Body of pancreas (tissue), 4 donors: ENCODE measurements at regions of chr6 and their contacts with region 1.

Region 1: DNA sequence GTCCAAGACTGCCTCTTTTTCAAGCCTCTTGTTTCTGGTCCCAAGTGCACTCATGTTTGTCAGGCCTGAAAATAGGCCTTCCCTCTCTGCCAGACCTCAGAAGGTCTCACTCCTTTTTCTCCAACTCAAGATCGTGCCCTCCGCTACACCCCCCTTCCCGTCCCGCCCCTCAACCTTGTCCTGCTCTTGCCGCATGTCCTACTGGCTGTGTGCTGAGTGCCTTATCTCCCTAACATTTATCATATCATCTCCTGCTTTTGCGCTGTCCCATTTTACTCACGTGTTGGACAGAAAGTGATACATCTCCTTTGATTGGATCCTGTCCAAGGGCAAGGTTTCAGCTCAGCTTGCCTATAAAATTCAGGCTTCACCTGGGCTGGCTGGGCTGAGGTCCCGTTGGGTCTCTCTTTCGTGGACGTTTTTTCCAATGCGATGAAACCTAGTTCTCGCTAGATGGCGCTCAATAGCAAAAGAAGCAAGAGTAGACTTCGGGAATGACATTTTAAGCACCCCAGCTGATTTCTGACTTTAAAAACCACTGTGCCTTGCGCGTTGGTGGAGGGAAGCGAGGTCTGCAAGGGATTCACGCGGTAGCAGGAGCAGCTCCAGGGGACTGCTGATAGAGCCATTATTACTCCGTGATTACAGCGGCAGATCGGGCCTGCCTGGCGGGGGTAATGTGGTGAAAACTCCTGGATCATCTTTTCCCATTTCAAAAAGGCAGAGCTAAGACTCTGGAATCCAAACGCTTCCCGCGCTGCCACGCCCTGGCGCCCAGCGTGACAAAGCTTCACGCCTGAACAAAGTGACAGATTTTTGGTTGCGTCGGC is 137.6 kb downstream of the IMPG1 start:
- DNase-seq: peak; percentile 54 to 76 (median 65)
- ATAC-seq: peak; percentile 86
- H3K4me3 ChIP-seq: no peak overlapping the region
- H3K27ac ChIP-seq: no peak overlapping the region
- H3K4me1 ChIP-seq: peaks cover 3% of the 10 kb centered on the region
- H3K27me3 ChIP-seq: no peaks in the 10 kb centered on the region
- CTCF ChIP-seq: peak; percentile 57 to 87 (median 78)
- POLR2A ChIP-seq: peak in 1 of 3 donors; percentile 6

Region 2: GRCh38 chr6:75386053-75386770 is 548.6 kb before region 1 on chr6:
- intact Hi-C with region 1: no loop called
- DNase-seq: no peak
- ATAC-seq: no peak
- H3K4me3 ChIP-seq: no peak overlapping the region
- H3K27ac ChIP-seq: no peak overlapping the region
- H3K4me1 ChIP-seq: no peaks in the 10 kb centered on the region
- H3K27me3 ChIP-seq: no peaks in the 10 kb centered on the region
- CTCF ChIP-seq: no peak
- POLR2A ChIP-seq: no peak

Region 3: GRCh38 chr6:75802366-75802765 is 132.5 kb before region 1 on chr6:
- intact Hi-C with region 1: no loop called
- DNase-seq: no peak
- ATAC-seq: no peak
- H3K4me3 ChIP-seq: no peak overlapping the region
- H3K27ac ChIP-seq: no peak overlapping the region
- H3K4me1 ChIP-seq: no peaks in the 10 kb centered on the region
- H3K27me3 ChIP-seq: no peaks in the 10 kb centered on the region
- CTCF ChIP-seq: no peak
- POLR2A ChIP-seq: no peak

Region 4: DNA sequence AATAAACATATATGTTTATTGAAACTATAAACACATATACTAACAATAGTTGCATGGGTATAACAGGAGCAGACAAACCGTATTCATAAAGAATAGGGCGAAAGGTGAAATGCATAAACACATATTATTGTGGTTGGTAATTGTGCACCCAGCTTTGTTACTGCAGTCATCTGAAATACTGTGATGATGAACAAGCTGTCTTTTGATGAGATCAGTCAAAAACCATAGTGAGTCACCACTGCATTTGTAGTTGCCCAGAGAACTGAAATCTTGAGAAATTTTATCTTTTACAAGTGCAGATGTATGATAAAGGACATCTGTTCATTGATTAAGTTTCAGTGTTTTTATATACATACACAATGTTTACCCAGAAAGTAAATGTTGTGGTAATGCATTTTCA is 52.1 kb before region 1 on chr6:
- intact Hi-C with region 1: no loop called
- DNase-seq: no peak
- ATAC-seq: no peak
- H3K4me3 ChIP-seq: no peak overlapping the region
- H3K27ac ChIP-seq: no peak overlapping the region
- H3K4me1 ChIP-seq: peaks cover 12% of the 10 kb centered on the region
- H3K27me3 ChIP-seq: no peaks in the 10 kb centered on the region
- CTCF ChIP-seq: no peak
- POLR2A ChIP-seq: no peak

Region 5: GRCh38 chr6:76351275-76351674 is 416.4 kb after region 1 on chr6:
- intact Hi-C with region 1: loop called (anchors 5 kb)
- DNase-seq: peak; percentile 36 to 63 (median 42)
- ATAC-seq: peak; percentile 68
- H3K4me3 ChIP-seq: no peak overlapping the region
- H3K27ac ChIP-seq: no peak overlapping the region
- H3K4me1 ChIP-seq: no peaks in the 10 kb centered on the region
- H3K27me3 ChIP-seq: no peaks in the 10 kb centered on the region
- CTCF ChIP-seq: peak; percentile 34 to 80 (median 59)
- POLR2A ChIP-seq: no peak

Region 6: GRCh38 chr6:77466055-77466450 is 1531.2 kb after region 1 on chr6:
- intact Hi-C with region 1: loop called (anchors 10 kb)
- DNase-seq: peak; percentile 63 to 77 (median 74)
- ATAC-seq: peak; percentile 89
- H3K4me3 ChIP-seq: peak overlapping the region in 1 of 2 donors; percentile 61
- H3K27ac ChIP-seq: peak overlapping the region in 2 of 4 donors; percentile 26 to 41
- H3K4me1 ChIP-seq: peaks cover 34% of the 10 kb centered on the region
- H3K27me3 ChIP-seq: peaks cover 6 to 22% of the 10 kb centered on the region in 2 donors
- CTCF ChIP-seq: peak; percentile 53 to 83 (median 69)
- POLR2A ChIP-seq: no peak